CD8-positive, alpha-beta memory T cell (primary cell): ENCODE measurements at regions of chr3 and their contacts with region 1.

Region 1: GRCh38 chr3:47017504-47018268 is 38.2 kb downstream of the NBEAL2 start:
- DNase-seq: no peak
- H3K4me3 ChIP-seq: no peak overlapping the region
- H3K4me3 Mint-ChIP-seq: peak overlapping the region in 2 of 7 donors; percentile 2 to 45
- H3K27ac ChIP-seq: peak overlapping the region; percentile 29
- H3K27ac Mint-ChIP-seq: peak overlapping the region; percentile 75 to 95 (median 86)
- H3K4me1 ChIP-seq: peaks cover 17% of the 10 kb centered on the region
- H3K4me1 Mint-ChIP-seq: peaks cover 39 to 65% (median 51%) of the 10 kb centered on the region in 3 donors
- H3K27me3 ChIP-seq: no peaks in the 10 kb centered on the region
- H3K27me3 Mint-ChIP-seq: no peaks in the 10 kb centered on the region

Region 2: DNA sequence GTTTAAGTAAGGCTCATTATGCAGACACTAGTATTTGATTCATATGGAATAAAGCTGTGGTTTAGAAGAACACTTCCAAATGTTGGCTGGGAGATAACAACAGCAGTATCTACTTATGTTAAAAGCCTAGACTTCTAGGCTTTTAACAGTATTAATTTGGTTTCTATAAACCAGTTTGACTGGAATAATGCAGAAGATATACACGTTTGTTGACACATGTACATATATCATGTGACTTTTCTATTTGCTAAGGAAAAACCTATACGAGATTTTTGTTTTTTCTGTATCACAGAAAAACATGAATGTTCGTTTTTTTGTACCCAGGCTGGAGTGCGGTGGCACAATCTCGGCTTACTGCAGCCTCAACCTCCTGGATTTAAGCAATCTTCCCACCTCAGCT is 34.2 kb after region 1 on chr3:
- CTCF ChIA-PET with region 1: no interaction called
- POLR2A ChIA-PET with region 1: no interaction called
- DNase-seq: no peak
- H3K4me3 ChIP-seq: no peak overlapping the region
- H3K4me3 Mint-ChIP-seq: no peak overlapping the region
- H3K27ac ChIP-seq: no peak overlapping the region
- H3K27ac Mint-ChIP-seq: no peak overlapping the region
- H3K4me1 ChIP-seq: peaks cover 6% of the 10 kb centered on the region
- H3K4me1 Mint-ChIP-seq: peaks cover 21 to 46% (median 38%) of the 10 kb centered on the region in 3 donors
- H3K27me3 ChIP-seq: no peaks in the 10 kb centered on the region
- H3K27me3 Mint-ChIP-seq: no peaks in the 10 kb centered on the region

Region 3: DNA sequence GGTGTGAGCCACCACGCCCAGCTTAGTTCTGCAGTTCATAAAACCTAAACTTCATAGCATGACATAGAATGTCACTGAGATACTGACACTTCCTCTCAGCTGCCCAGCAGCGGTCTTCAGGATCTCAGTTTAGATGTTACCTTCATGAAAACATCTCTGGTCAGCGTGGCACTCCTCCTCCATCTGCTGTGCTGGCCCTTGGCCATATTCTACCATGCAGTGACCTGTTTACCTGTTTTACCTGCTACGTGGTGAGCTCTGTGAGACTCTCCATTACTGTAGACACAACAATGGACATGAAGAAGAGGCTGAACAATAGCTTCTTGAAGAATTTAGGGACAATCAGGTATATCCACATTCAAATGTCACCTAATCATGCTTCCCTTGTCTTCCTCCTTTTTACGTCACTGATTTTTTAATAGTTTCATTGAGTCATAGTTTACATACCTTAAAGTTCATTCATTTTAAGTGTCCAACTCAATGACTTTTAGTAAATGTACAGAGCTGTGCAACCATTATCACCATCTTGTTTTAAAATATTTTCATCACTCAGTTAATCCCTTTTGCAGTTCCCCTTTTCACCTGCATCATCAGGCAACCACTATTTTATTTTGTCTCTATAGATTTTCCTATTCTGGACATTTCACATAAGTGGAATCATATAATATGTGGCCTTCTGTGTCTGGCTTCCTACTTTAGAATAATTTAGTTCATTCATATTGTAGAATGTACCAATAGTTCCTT is 330.9 kb after region 1 on chr3:
- CTCF ChIA-PET with region 1: no interaction called
- POLR2A ChIA-PET with region 1: interaction called, 14 read pairs
- DNase-seq: no peak
- H3K4me3 ChIP-seq: no peak overlapping the region
- H3K4me3 Mint-ChIP-seq: no peak overlapping the region
- H3K27ac ChIP-seq: no peak overlapping the region
- H3K27ac Mint-ChIP-seq: peak overlapping the region in 2 of 8 donors; percentile 43 to 55
- H3K4me1 ChIP-seq: no peaks in the 10 kb centered on the region
- H3K4me1 Mint-ChIP-seq: peaks cover 0 to 3% (median 0%) of the 10 kb centered on the region in 3 donors
- H3K27me3 ChIP-seq: no peaks in the 10 kb centered on the region
- H3K27me3 Mint-ChIP-seq: no peaks in the 10 kb centered on the region